Esophagus muscularis mucosa (tissue), 4 donors: ENCODE measurements at regions of chr1 and their contacts with region 1.

Region 1: GRCh38 chr1:201649761-201650622 is 111.1 kb downstream of the NAV1 start:
- DNase-seq: peak; percentile 95
- H3K4me3 ChIP-seq: peak overlapping the region; percentile 57 to 74 (median 64)
- H3K27ac ChIP-seq: peak overlapping the region; percentile 70 to 88 (median 78)
- H3K4me1 ChIP-seq: peaks cover 51 to 66% (median 63%) of the 10 kb centered on the region in 4 donors
- H3K27me3 ChIP-seq: no peaks in the 10 kb centered on the region
- CTCF ChIP-seq: no peak
- EP300 ChIP-seq: no peak
- POLR2A ChIP-seq: no peak

Region 2: GRCh38 chr1:201696217-201696761 is 46.3 kb after region 1 on chr1:
- intact Hi-C with region 1: loop called (anchors 5 kb)
- DNase-seq: peak; percentile 96
- H3K4me3 ChIP-seq: no peak overlapping the region
- H3K27ac ChIP-seq: peak overlapping the region; percentile 24 to 66 (median 58)
- H3K4me1 ChIP-seq: peaks cover 48 to 59% (median 50%) of the 10 kb centered on the region in 4 donors
- H3K27me3 ChIP-seq: no peaks in the 10 kb centered on the region
- CTCF ChIP-seq: no peak
- EP300 ChIP-seq: no peak
- POLR2A ChIP-seq: no peak

Region 3: DNA sequence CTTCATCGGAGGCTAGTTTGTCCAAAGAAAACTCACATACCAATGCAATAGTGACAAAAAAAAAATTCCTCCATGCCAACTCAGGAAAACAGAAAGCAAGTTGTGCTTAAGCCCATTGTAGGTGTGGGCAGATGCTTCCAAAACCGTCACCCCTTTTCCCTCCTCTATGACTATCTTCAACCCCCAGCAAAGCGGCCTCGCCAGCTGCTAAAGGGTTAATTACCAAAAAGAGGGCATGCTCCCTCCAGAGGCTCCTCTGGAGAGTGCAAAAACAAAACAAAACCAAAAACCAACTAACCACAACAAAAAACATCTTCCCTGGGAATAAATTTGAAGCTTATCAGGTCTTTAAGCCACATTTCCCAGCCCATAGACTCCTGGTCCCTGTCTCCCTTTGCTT is 295.2 kb after region 1 on chr1:
- intact Hi-C with region 1: no loop called
- DNase-seq: no peak
- H3K4me3 ChIP-seq: peak overlapping the region; percentile 74 to 91 (median 82)
- H3K27ac ChIP-seq: peak overlapping the region; percentile 92 to 95 (median 94)
- H3K4me1 ChIP-seq: peaks cover 8 to 45% (median 28%) of the 10 kb centered on the region in 4 donors
- H3K27me3 ChIP-seq: no peaks in the 10 kb centered on the region
- CTCF ChIP-seq: peak; percentile 26 to 55 (median 31)
- EP300 ChIP-seq: no peak
- POLR2A ChIP-seq: no peak